ENCODE measurements at regions of chr17 and their contacts with region 1.

Region 1: DNA sequence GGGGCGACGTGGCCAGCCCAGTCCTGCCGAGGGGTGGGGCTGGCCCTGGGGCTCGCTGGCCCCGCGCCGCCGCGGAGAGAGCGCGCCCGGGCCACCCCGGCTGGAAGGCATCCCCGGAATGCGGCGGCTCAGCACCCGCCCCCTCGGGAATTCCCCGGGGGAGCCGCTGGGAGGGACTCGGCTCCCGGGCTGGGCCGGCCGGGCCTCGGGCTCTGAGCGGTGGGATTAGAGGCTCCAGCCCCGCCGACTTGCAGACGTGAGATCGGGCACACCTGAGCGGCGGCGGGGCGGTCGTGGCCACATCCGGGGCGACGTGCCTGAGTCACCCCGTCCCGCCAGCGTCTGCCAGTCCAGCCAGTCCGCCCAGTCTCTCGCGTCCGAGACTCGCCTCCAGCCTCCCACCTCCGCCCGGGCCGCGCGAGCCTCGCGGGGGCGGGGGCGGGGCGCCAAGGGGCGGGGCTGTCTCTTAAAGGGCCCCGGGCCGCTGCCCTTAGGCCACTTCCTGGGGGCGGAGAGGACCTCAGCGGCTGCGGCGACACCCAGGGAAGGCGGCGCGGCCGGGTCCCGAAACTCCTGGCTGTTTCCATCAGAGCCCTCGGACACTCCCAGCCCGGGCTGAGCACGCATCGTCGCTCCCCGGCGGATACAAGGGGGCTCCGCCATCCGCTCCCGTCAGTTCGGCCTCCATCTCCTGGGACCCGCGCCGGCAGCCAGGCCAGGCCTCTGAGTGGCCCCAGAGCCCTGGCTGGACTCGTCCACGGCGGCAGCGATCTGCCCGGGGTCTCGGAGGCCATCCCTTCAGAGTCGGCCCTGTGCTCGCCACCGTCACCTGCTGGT is at the start of gene KCTD11:
- H3K4me3 Mint-ChIP-seq: peak within 1 kb of the TSS; percentile 97
- H3K27ac Mint-ChIP-seq: peak within 1 kb of the TSS; percentile 84
- H3K4me1 Mint-ChIP-seq: peaks cover 81% of the 10 kb centered on the region
- H3K27me3 Mint-ChIP-seq: peaks cover 8% of the 10 kb centered on the region

Region 2: DNA sequence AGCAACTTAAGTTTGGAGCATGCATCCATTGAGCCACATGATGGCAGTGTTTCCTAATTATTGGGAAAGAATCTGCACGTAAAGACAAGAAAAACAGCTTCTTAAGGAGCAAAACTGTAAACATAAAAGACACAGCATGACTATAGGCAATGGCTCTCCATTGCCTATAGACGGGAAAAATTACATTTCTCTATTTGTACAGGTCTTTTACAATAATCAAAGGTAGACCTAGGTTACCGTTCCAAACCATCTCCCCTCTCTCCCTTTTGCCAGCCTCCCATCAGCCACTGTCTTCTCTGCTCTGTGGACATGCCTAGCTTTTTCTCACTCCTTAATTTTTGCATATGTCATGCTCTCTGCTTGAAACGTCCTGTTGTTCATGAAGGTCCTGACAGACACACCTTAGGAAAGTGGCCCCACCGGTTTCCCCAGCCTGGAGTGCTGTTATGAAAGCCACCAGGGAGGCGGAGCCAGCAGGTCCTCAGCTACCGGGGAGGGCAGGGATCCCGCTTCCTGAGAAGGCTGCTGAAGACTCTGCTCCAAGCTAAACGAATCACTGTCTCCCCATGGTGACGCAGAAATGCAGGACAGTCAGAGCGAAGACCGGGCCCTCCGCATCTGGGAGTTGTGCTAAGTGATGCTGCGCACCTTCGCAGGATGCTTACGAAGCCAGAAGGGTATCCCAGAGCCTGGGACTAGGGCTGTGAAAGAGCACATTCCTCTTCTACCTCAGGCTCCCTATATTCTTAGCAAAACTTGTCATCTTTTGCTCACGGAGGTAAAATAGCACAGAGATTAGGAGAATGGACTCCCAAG is 305.8 kb before region 1 on chr17:
- intact Hi-C with region 1: loop called (anchors 2 kb)
- H3K4me3 Mint-ChIP-seq: peak overlapping the region; percentile 70
- H3K27ac Mint-ChIP-seq: peak overlapping the region; percentile 70
- H3K4me1 Mint-ChIP-seq: peaks cover 43% of the 10 kb centered on the region
- H3K27me3 Mint-ChIP-seq: peaks cover 46% of the 10 kb centered on the region

Region 3: DNA sequence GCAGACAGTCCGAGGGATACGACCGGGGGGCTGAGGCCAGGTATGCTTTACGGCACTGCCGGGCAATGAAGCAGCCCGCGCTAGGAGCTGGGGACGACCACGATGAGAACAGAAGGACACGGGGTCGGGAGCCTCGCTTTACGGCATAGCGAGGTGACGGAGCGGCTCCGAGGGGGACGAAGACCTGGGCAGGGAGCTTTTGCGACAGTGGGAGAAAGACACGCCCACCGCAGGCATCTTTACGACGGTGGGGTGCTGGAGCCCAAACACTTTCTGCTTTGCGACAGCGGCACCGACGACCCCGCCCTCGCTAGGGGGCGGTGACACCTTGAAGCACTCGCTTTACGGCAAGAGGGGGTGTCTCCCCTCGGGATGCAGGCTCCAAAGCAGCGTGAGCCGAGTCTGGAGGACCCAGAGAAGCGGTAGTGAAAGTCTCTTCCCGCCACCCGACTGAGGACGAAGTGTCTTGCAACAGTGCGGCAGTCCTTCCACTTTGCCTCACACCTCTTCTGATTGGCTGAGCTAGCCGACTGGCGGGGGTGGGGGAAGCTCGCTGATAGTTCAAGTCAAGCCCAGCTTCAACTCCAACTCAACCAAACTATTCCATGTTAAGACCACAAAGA is 22.4 kb before region 1 on chr17:
- intact Hi-C with region 1: loop called (anchors 1 kb)
- H3K4me3 Mint-ChIP-seq: peak overlapping the region; percentile 99
- H3K27ac Mint-ChIP-seq: peak overlapping the region; percentile 98
- H3K4me1 Mint-ChIP-seq: peaks cover 54% of the 10 kb centered on the region
- H3K27me3 Mint-ChIP-seq: no peaks in the 10 kb centered on the region

Region 4: GRCh38 chr17:7403977-7404736 is 52.3 kb after region 1 on chr17 and contains the start of gene TMEM256:
- intact Hi-C with region 1: loop called (anchors 10 kb)
- H3K4me3 Mint-ChIP-seq: peak within 1 kb of the TSS; percentile 84
- H3K27ac Mint-ChIP-seq: peak within 1 kb of the TSS; percentile 92
- H3K4me1 Mint-ChIP-seq: peaks cover 7% of the 10 kb centered on the region
- H3K27me3 Mint-ChIP-seq: peaks cover 32% of the 10 kb centered on the region

Region 5: DNA sequence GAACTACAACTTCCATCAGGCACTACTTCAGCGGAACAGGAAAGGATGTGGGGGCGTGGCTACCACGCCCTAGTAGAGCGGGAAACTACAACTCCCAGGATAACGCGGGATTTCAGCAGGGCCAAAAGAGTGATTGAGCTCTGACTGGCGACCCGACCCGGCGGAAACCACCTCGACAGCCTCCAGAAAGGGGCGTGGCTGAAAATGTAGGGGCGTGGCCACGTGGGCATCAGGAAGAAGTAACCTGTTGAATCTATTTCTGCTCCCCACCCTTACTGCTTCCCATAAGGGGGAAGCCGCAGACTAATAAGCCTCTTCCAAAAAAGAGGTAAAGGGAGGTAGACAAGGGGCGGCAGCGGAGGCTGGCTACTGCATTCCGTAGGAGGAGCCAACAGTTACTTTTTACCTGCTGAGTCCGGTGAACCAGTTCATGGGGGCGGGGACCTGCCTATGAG is 83.4 kb after region 1 on chr17 and contains the start of gene TMEM102:
- intact Hi-C with region 1: loop called (anchors 5 kb)
- H3K4me3 Mint-ChIP-seq: peak within 1 kb of the TSS; percentile 86
- H3K27ac Mint-ChIP-seq: peak within 1 kb of the TSS; percentile 90
- H3K4me1 Mint-ChIP-seq: peaks cover 39% of the 10 kb centered on the region
- H3K27me3 Mint-ChIP-seq: peaks cover 23% of the 10 kb centered on the region

Region 6: GRCh38 chr17:7484067-7484918 is 132.4 kb after region 1 on chr17 and contains the start of gene POLR2A:
- intact Hi-C with region 1: loop called (anchors 10 kb)
- H3K4me3 Mint-ChIP-seq: peak within 1 kb of the TSS; percentile 97
- H3K27ac Mint-ChIP-seq: peak within 1 kb of the TSS; percentile 100
- H3K4me1 Mint-ChIP-seq: peaks cover 76% of the 10 kb centered on the region
- H3K27me3 Mint-ChIP-seq: no peaks in the 10 kb centered on the region

Region 7: DNA sequence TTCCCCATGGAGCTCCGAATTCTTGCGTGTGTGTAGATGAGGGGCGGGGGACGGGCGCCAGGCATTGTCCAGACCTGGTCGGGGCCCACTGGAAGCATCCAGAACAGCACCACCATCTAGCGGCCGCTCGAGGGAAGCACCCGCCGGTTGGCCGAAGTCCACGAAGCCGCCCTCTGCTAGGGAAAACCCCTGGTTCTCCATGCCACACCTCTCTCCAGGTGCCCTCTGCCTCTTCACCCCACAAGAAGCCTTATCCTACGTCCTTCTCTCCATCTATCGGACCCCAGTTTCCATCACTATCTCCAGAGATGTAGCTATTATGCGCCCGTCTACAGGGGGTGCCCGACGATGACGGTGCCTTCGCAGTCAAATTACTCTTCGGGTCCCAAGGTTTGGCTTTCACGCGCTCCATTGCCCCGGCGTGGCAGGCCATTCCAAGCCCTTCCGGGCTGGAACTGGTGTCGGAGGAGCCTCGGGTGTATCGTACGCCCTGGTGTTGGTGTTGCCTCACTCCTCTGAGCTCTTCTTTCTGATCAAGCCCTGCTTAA is 209.2 kb after region 1 on chr17:
- intact Hi-C with region 1: loop called (anchors 1 kb)
- H3K4me3 Mint-ChIP-seq: peak overlapping the region; percentile 97
- H3K27ac Mint-ChIP-seq: peak overlapping the region; percentile 96
- H3K4me1 Mint-ChIP-seq: peaks cover 86% of the 10 kb centered on the region
- H3K27me3 Mint-ChIP-seq: no peaks in the 10 kb centered on the region

Measured in dendritic cell treated with granulocyte-macrophage colony-stimulating factor and Interleukin-4, amounts not matched to agents 40 ng/mL and 50 ng/mL, for 4 days (primary cell).